HAP-1 (cell line): ENCODE measurements at regions of chr11 and their contacts with region 1.

Region 1: GRCh38 chr11:66408488-66409214 is 12.2 kb upstream of the NPAS4 start:
- DNase-seq: peak; percentile 85 to 95
- H3K4me3 ChIP-seq: peak overlapping the region; percentile 32
- H3K4me1 ChIP-seq: no peaks in the 10 kb centered on the region
- H3K27me3 ChIP-seq: peaks cover 7% of the 10 kb centered on the region

Region 2: DNA sequence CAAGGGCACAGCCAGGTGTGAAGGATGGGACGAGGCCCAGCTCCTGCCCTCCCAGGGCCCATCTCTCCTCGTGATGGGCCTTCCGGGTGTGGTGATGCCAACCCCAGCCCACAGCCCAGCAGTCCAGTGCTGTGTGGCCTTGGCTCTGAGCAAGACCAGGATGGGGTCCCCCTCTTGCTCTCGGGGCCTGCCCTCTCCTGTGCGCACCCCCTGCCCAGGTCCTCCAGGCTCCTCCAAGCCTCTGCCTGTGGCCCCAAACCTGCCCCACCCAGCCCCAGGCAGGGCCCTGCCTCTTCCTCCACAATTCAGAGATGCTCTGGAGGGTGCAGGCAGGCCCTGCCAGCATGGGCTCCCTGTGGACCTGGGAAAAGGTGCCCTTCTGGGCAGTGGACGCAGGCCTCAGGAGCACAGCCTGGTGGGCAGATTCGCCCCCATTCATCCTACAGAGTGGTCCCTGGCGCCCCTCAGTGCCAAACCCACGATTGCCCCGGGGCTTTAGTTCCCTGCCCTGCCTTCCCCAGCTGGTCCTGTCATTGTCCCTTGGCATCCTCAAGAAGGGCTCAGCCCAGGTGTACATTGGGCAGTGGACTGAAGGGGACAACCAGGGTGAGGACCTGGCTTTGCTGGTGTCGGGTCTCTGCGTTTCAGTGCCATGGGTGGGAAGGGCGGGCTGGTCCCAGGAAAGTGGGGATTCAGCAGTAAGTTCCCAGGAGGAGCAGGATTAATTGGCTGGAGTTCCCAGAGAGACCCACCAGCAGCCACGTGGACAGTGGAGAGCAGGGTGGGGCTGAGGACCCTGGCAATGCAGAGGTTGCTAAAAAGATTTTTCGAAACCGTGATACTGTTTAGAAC is 426.5 kb before region 1 on chr11:
- in situ Hi-C with region 1: no loop called
- DNase-seq: no peak
- H3K4me3 ChIP-seq: no peak overlapping the region
- H3K4me1 ChIP-seq: no peaks in the 10 kb centered on the region
- H3K27me3 ChIP-seq: no peaks in the 10 kb centered on the region

Region 3: GRCh38 chr11:66686801-66687750 is 278.4 kb after region 1 on chr11:
- in situ Hi-C with region 1: loop called (anchors 10 kb)
- DNase-seq: no peak
- H3K4me3 ChIP-seq: no peak overlapping the region
- H3K4me1 ChIP-seq: no peaks in the 10 kb centered on the region
- H3K27me3 ChIP-seq: no peaks in the 10 kb centered on the region

Region 4: GRCh38 chr11:66701432-66702240 is 293.0 kb after region 1 on chr11:
- in situ Hi-C with region 1: no loop called
- DNase-seq: no peak
- H3K4me3 ChIP-seq: no peak overlapping the region
- H3K4me1 ChIP-seq: no peaks in the 10 kb centered on the region
- H3K27me3 ChIP-seq: no peaks in the 10 kb centered on the region

Region 5: DNA sequence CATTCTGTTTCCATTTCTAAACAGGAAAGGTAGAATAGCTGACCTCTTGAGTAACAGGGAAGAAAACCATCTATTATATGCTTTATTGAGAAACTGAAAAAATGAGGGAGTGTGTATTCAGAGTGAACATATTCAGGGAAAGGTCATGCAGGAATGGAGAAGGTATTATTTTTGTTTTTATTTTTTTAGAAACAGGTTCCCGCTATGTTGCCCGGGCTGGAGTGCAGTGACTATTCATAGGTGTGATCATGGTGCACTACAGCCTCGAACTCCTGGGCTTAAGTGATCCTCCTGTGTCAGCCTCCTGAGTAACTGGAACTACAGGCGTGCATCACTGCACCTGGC is 425.8 kb after region 1 on chr11:
- in situ Hi-C with region 1: loop called (anchors 5 kb)
- DNase-seq: no peak
- H3K4me3 ChIP-seq: no peak overlapping the region
- H3K4me1 ChIP-seq: no peaks in the 10 kb centered on the region
- H3K27me3 ChIP-seq: no peaks in the 10 kb centered on the region